Activated CD4-positive, alpha-beta T cell treated with anti-CD3 and anti-CD28 coated beads for 36 hours (primary cell): ENCODE measurements at regions of chr6 and their contacts with region 1.

Region 1: DNA sequence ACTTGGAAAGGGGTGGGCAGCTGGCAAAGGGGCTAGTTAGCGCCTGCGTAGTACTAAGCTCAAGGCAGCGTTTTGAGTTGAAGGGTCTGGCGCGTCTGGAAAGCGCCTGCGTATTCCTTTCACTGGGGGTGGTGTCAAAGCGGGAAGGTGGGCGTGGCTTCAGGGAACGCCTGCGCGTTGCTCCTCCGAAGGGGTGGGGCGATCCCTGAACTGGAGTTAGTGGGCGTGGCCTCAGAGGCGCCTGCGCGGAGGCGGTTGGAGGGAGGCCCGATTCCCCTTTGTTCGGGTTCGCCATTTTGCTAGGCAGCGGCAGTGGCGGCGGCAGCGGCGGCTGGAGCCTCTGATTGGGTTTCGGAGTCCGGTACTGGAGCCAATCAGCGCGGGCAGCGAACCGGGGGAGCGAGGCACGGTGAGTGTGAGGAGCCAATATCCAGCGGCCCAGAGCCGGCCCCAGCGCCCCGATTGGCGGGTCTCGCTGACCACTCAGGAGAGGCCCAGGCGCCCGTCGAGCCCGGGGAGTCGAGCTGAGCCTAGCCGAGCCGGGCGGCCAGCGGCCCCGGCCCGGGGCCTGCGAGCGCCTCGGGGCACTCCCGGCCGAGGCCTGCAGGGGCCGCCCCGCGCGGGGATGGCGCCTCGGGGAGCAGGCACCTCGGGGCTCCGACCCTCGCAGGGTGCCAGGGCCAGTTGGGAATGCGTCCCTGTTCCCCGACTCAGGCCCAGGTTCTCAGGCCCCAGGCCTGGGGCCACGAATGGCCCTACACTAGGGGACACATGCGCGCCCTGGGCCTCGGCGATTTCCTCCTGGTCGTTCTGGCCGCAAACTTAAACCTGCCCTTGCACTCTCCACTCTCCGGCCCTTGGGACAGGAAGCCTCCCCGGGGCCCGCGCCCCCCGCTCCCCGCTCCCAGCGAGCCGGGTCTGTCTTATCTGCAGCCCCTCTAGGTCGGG is at the start of gene NFYA:
- DNase-seq: peak; percentile 100
- ATAC-seq: peak; percentile 75
- H3K4me3 Mint-ChIP-seq: peak within 1 kb of the TSS; percentile 94
- H3K27ac Mint-ChIP-seq: peak within 1 kb of the TSS; percentile 98
- H3K4me1 Mint-ChIP-seq: peaks cover 48% of the 10 kb centered on the region
- H3K27me3 Mint-ChIP-seq: no peaks in the 10 kb centered on the region
- total RNA-seq, gene NFYA: 31.5 to 38.2 TPM

Region 2: DNA sequence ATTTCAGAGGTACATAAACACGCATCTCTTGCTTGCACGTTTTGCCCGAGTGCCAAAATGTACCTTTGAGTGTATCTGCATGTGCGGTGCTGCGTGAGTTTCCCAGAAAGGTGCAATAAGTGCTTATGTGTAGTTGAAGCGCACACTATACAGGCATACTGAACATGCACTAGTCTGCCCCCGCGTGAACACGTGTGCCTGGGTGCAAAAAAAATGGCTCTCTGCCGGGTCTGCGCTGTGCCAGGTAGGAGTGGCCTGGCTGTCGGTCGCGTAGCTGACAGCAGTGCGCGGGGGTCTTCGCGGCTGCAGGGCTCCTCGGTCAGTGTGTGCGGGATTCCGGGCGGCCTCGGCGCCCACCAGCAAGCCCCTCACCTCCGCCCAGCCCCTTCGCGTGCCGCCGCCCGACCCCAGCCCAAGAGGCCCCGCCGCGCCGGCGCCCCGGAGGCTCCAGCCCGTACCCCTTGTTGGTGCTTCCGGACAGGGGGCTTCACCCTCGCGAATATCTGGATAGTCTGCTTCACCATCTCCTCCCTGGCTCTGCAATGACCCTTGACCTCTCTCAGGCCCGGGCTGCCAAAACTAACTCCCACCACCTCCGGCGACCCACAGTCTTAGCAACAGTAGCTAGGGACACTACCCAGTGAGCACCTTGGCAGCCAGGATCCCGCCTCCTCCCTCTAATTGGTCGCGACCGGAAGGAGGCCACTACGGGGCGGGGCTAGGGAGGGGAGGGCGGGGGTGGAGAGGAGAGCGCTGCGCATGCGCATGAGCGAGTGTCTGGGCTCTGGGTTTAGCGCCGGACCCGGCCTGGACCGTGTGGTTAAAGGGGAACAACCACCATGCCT is 1347.9 kb before region 1 on chr6 and contains the start of gene KIF6:
- CTCF ChIA-PET with region 1: no interaction called
- POLR2A ChIA-PET with region 1: no interaction called
- intact Hi-C with region 1: loop called in 1 of 2 experiments (anchors 2 kb)
- DNase-seq: peak; percentile 92
- ATAC-seq: peak; percentile 100
- H3K4me3 Mint-ChIP-seq: peak within 1 kb of the TSS; percentile 90
- H3K27ac Mint-ChIP-seq: peak within 1 kb of the TSS; percentile 60
- H3K4me1 Mint-ChIP-seq: peaks cover 3% of the 10 kb centered on the region
- H3K27me3 Mint-ChIP-seq: peaks cover 5% of the 10 kb centered on the region
- total RNA-seq, gene KIF6: 0.43 to 0.49 TPM

Region 3: GRCh38 chr6:40164345-40164755 is 908.6 kb before region 1 on chr6:
- CTCF ChIA-PET with region 1: no interaction called
- POLR2A ChIA-PET with region 1: no interaction called
- intact Hi-C with region 1: no loop called
- DNase-seq: no peak
- ATAC-seq: no peak
- H3K4me3 Mint-ChIP-seq: no peak overlapping the region
- H3K27ac Mint-ChIP-seq: no peak overlapping the region
- H3K4me1 Mint-ChIP-seq: no peaks in the 10 kb centered on the region
- H3K27me3 Mint-ChIP-seq: peaks cover 7% of the 10 kb centered on the region

Region 4: GRCh38 chr6:41150669-41151068 is 77.7 kb after region 1 on chr6:
- CTCF ChIA-PET with region 1: no interaction called
- POLR2A ChIA-PET with region 1: no interaction called
- intact Hi-C with region 1: no loop called
- DNase-seq: no peak
- ATAC-seq: no peak
- H3K4me3 Mint-ChIP-seq: no peak overlapping the region
- H3K27ac Mint-ChIP-seq: no peak overlapping the region
- H3K4me1 Mint-ChIP-seq: peaks cover 9% of the 10 kb centered on the region
- H3K27me3 Mint-ChIP-seq: no peaks in the 10 kb centered on the region

Region 5: DNA sequence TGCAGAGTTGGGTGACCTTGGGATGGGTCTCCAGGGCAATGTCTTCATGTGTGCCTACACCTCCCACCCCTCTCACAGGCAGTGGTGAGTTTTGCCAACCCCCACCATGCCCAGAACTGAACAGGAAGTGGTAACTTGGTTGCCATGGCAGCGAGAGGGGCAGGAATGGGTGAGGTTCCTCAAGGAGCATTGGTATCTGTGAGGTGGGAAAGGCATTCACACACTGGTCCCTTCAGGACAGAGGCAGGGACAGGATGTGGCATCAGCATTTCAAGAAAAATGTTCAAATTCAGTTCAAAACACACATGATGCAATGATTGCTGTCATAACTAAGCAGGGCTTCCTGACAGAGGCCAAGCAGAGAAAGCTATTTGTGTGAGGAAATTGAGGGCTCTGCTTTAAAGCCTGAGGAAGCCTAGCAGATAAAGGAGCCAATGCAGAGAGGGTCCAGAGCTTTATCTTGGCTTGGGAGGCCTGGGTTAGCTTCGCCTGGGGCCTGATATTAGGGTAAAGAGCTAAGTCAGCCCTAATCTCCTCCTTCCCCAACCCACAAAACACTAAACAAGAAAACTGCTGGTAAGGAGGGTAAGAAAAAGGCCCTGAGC is 127.4 kb after region 1 on chr6:
- CTCF ChIA-PET with region 1: interaction called, 4 read pairs
- POLR2A ChIA-PET with region 1: no interaction called
- intact Hi-C with region 1: loop called in 1 of 2 experiments (anchors 1 kb)
- DNase-seq: peak; percentile 78
- ATAC-seq: peak; percentile 56
- H3K4me3 Mint-ChIP-seq: peak overlapping the region; percentile 71
- H3K27ac Mint-ChIP-seq: peak overlapping the region; percentile 93
- H3K4me1 Mint-ChIP-seq: peaks cover 55% of the 10 kb centered on the region
- H3K27me3 Mint-ChIP-seq: no peaks in the 10 kb centered on the region

Region 6: GRCh38 chr6:41531591-41532582 is 458.9 kb after region 1 on chr6:
- CTCF ChIA-PET with region 1: no interaction called
- POLR2A ChIA-PET with region 1: no interaction called
- intact Hi-C with region 1: loop called in 1 of 2 experiments (anchors 5 kb)
- DNase-seq: peak; percentile 87
- ATAC-seq: peak; percentile 88
- H3K4me3 Mint-ChIP-seq: peak overlapping the region; percentile 64
- H3K27ac Mint-ChIP-seq: peak overlapping the region; percentile 93
- H3K4me1 Mint-ChIP-seq: peaks cover 35% of the 10 kb centered on the region
- H3K27me3 Mint-ChIP-seq: peaks cover 15% of the 10 kb centered on the region

Region 7: GRCh38 chr6:41787219-41787917 is 714.4 kb after region 1 on chr6 and contains the start of gene TOMM6:
- CTCF ChIA-PET with region 1: interaction called, 3 read pairs
- POLR2A ChIA-PET with region 1: no interaction called
- intact Hi-C with region 1: loop called (anchors 1 to 2 kb)
- DNase-seq: peak; percentile 98
- ATAC-seq: peak; percentile 86
- H3K4me3 Mint-ChIP-seq: peak within 1 kb of the TSS; percentile 96
- H3K27ac Mint-ChIP-seq: peak within 1 kb of the TSS; percentile 98
- H3K4me1 Mint-ChIP-seq: peaks cover 19% of the 10 kb centered on the region
- H3K27me3 Mint-ChIP-seq: peaks cover 2% of the 10 kb centered on the region
- total RNA-seq, gene TOMM6: 282 to 345 TPM

Region 8: DNA sequence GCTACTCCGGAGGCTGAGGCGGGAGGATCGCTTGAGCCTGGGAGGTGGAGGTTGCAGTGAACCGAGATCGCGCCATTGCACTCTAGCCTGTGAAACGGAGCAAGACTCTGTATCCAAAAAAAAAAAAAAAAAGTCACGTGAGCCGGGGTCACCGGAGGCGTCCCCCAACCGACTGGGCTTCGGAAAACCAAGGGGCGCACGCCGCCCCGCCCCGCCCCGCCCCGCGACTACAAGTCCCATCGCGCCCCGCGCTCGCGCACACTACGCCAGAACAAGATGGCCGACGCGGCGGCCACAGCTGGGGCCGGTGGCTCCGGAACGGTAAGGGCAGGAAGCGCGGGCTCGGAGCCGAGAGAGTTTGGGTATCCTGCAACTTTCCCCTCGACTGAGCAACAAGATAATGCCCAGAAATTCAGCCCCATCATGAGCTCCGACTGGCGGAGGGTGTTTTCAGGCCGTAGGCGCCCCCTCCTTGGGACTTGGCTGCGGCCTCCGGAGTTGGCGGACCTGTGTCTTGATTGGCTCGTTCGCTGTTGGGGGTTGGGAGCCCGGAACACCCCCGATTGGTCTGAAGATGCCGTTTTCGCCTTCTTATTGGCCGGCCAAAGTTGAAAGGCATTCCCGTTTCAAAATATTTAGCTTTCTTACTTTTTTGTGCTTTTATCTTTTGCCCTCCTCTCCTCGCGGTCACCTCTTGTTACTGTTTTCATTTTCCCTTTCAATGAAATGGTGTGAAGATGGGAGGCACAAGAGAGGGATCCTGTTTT is 977.5 kb after region 1 on chr6 and contains the start of gene TAF8:
- CTCF ChIA-PET with region 1: no interaction called
- POLR2A ChIA-PET with region 1: no interaction called
- intact Hi-C with region 1: loop called in 1 of 2 experiments (anchors 1 kb)
- DNase-seq: peak; percentile 94
- ATAC-seq: peak; percentile 76
- H3K4me3 Mint-ChIP-seq: peak within 1 kb of the TSS; percentile 88
- H3K27ac Mint-ChIP-seq: peak within 1 kb of the TSS; percentile 96
- H3K4me1 Mint-ChIP-seq: peaks cover 64% of the 10 kb centered on the region
- H3K27me3 Mint-ChIP-seq: no peaks in the 10 kb centered on the region
- total RNA-seq, gene TAF8: 52.3 to 53.1 TPM